ENCODE measurements at regions of chr4 and their contacts with region 1.

Region 1: GRCh38 chr4:80655662-80656061 is 320.1 kb downstream of the CFAP299 start:
- DNase-seq: no peak

Region 2: DNA sequence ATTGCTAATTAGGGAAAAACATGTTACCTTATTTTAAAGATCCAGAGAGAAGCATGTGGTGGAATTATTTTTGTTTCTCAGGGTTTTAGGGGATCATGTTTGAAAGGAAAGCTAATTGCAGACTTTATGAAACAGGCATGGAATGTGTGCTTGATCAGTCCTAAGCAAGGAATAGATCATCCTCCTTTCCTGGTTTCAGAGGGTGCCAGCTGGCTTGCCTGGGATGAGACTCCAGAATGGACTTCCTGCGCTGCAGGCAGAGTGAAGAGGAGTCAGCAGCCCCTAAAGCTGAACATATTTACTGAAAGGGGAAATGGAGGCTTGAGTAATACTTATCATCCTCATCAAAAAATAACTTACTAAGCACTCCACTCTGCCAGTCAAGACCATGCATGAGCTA is 375.9 kb before region 1 on chr4:
- intact Hi-C with region 1: loop called in 1 of 2 experiments (anchors 5 kb)
- DNase-seq: no peak

Region 3: GRCh38 chr4:80592950-80593349 is 62.7 kb before region 1 on chr4:
- intact Hi-C with region 1: no loop called
- DNase-seq: no peak

Measured in posterior vena cava (tissue), 2 donors.